ENCODE measurements at regions of chr21 and their contacts with region 1.

Region 1: GRCh38 chr21:42009831-42010523 is at the start of gene ZBTB21:
- DNase-seq: peak; percentile 97
- ATAC-seq: peak; percentile 89
- H3K4me3 ChIP-seq: peak within 1 kb of the TSS; percentile 63
- H3K27ac ChIP-seq: peak within 1 kb of the TSS; percentile 93
- H3K4me1 ChIP-seq: peaks cover 4% of the 10 kb centered on the region
- H3K27me3 ChIP-seq: no peaks in the 10 kb centered on the region
- CTCF ChIP-seq: no peak
- POLR2A ChIP-seq: peak; percentile 80
- RAD21 ChIP-seq: no peak
- total RNA-seq, gene ZBTB21: 12.0 and 13.6 TPM in 2 replicates

Region 2: GRCh38 chr21:41816220-41817165 is 193.5 kb before region 1 on chr21:
- CTCF ChIA-PET with region 1: no interaction called
- POLR2A ChIA-PET with region 1: no interaction called
- dilution Hi-C with region 1: no loop called
- in situ Hi-C with region 1: no loop called
- intact Hi-C with region 1: loop called (anchors 2 kb)
- DNase-seq: peak; percentile 46
- ATAC-seq: peak; percentile 84
- H3K4me3 ChIP-seq: no peak overlapping the region
- H3K27ac ChIP-seq: no peak overlapping the region
- H3K4me1 ChIP-seq: no peaks in the 10 kb centered on the region
- H3K27me3 ChIP-seq: no peaks in the 10 kb centered on the region
- CTCF ChIP-seq: peak; percentile 75
- POLR2A ChIP-seq: no peak
- RAD21 ChIP-seq: peak; percentile 76

Region 3: DNA sequence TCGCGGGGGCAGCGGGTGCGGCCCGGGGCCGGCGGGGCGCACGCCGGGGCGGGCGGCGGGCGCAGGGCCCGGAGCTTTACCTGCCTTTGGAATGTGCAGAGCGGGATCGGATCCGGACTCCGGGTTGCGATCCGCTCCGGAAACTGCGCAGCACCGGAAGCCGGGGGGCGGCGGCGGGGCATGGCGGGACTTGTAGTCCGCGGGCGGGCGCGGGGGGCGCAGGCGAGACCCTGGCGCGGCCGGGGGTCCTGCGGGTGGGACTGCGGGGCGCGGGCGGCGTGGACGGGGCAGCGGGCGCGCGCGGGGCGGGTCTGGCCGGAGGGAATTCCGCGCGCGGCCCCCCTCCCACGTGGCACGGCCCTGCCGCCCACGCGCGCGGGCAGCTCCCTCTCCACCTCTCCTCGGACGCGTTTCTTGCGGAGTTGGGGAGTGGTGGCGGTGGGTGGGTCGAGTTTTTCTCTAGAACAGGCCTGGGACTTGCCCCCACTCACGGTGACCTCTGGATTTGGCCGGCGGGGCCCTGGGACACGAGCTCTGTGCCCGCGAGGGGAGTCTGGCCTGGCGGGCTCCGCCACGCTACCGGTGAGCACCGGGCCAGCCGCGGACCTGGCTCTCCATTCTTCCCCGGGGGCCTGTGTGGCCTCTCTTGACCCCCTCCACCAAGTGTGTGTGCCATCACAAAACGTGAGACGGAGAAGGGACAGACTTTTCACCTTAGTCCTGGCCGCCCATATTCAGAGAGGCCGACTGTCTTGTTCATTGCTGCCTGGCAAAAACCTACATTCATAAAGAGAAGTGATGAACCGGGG is 130.6 kb before region 1 on chr21 and contains the start of gene PRDM15:
- CTCF ChIA-PET with region 1: no interaction called
- POLR2A ChIA-PET with region 1: no interaction called
- dilution Hi-C with region 1: no loop called
- in situ Hi-C with region 1: no loop called
- intact Hi-C with region 1: loop called (anchors 2 kb)
- DNase-seq: peak; percentile 82
- ATAC-seq: peak; percentile 88
- H3K4me3 ChIP-seq: peak within 1 kb of the TSS; percentile 88
- H3K27ac ChIP-seq: peak within 1 kb of the TSS; percentile 99
- H3K4me1 ChIP-seq: peaks cover 3% of the 10 kb centered on the region
- H3K27me3 ChIP-seq: no peaks in the 10 kb centered on the region
- CTCF ChIP-seq: no peak
- POLR2A ChIP-seq: 0 out of 2 replicates have a peak, but pooled peaks have one; percentile 31
- RAD21 ChIP-seq: no peak
- total RNA-seq, gene PRDM15: 5.6 and 8.8 TPM in 2 replicates

Region 4: DNA sequence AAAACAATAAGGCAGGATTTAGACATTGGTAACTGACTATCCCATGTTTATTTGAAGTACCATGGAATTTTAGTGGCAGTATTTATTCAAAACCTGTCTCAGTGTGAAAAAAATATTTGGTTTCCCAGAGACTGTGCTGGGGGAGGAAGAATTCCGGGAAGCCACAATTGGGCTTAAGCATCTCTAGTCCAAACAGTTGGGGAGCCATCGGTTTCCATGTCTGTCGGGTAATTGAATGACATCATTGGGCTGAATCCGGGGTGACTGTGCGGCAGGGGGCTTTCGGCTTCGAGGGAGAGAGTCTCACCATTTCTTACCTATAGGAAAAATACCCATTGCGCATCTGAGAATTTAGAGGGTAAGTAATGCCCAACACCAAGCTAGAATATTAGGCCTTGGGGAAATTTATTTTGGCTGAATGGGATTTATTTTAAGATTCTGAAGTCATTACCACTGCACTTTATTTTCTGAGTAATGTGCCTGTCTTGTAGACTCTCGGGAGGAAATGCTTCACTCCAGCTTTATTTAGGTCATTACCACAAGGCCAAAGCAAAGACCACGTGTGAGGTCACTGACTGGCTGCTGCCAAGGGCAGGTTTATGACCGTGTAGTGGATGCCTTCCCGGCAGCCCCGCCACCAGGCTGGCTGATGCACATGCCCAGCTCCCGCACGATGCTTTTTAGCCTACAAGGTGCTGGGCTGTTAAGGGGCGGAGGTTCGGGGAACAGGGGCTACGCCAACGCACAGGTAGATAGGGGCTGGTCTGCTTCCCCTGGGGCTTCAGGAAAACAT is 38.0 kb after region 1 on chr21:
- CTCF ChIA-PET with region 1: no interaction called
- POLR2A ChIA-PET with region 1: no interaction called
- dilution Hi-C with region 1: no loop called
- in situ Hi-C with region 1: no loop called
- intact Hi-C with region 1: loop called (anchors 5 kb)
- DNase-seq: peak; percentile 99
- ATAC-seq: peak; percentile 91
- H3K4me3 ChIP-seq: no peak overlapping the region
- H3K27ac ChIP-seq: peak overlapping the region; percentile 80
- H3K4me1 ChIP-seq: peaks cover 18% of the 10 kb centered on the region
- H3K27me3 ChIP-seq: no peaks in the 10 kb centered on the region; the same call in 1 of the 2 replicates
- CTCF ChIP-seq: 0 out of 2 replicates have a peak, but pooled peaks have one; percentile 31
- POLR2A ChIP-seq: no peak
- RAD21 ChIP-seq: peak; percentile 49

Region 5: DNA sequence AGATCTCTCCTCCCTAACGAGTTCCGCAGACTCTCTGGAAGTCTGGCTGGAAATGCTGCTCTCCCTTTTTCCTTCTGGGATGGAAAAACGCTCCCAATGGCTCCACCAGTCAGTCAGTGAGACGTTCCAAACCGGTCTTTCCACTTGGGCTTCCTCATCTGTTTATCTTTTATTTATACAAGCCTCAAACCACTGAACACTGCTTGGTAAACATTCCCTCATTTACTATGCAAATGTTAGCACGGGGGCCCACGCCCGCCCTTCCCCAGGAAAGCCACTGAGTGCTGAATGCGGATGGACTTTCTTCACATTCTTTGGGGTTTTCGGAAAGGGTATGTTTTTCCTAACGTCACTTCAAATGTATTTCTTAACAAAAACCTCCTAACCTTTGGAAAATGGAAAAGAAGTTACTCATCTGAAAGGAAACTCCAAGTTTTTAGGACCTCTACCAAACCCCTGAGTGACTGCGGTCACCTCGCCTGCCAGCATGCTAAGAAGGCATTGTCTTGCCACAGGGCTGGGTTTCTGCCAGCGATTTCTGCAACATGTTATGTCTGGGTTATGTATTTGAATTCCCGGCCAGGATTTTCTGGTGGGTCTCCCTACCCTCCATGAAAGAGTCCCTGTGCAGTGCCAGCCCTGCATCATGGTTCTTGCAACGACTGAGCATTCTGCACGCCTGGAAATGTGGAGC is 47.2 kb after region 1 on chr21:
- CTCF ChIA-PET with region 1: no interaction called
- POLR2A ChIA-PET with region 1: no interaction called
- dilution Hi-C with region 1: no loop called
- in situ Hi-C with region 1: no loop called
- intact Hi-C with region 1: loop called (anchors 2 kb)
- DNase-seq: peak; percentile 93
- ATAC-seq: peak; percentile 92
- H3K4me3 ChIP-seq: no peak overlapping the region
- H3K27ac ChIP-seq: peak overlapping the region; percentile 90
- H3K4me1 ChIP-seq: peaks cover 20% of the 10 kb centered on the region
- H3K27me3 ChIP-seq: peaks cover 1% of the 10 kb centered on the region; the same call in 1 of the 2 replicates
- CTCF ChIP-seq: no peak
- POLR2A ChIP-seq: peak; percentile 75; the same call in 1 of the 2 replicates
- RAD21 ChIP-seq: no peak; the same call in 1 of the 2 replicates

Region 6: GRCh38 chr21:42097860-42098454 is 88.0 kb after region 1 on chr21:
- CTCF ChIA-PET with region 1: no interaction called
- POLR2A ChIA-PET with region 1: no interaction called
- dilution Hi-C with region 1: no loop called
- in situ Hi-C with region 1: no loop called
- intact Hi-C with region 1: loop called (anchors 1 kb)
- DNase-seq: peak; percentile 99
- ATAC-seq: peak; percentile 87
- H3K4me3 ChIP-seq: no peak overlapping the region
- H3K27ac ChIP-seq: peak overlapping the region; percentile 94
- H3K4me1 ChIP-seq: peaks cover 16% of the 10 kb centered on the region
- H3K27me3 ChIP-seq: no peaks in the 10 kb centered on the region
- CTCF ChIP-seq: no peak
- POLR2A ChIP-seq: no peak; the same call in 1 of the 2 replicates
- RAD21 ChIP-seq: no peak; the same call in 1 of the 2 replicates

Region 7: GRCh38 chr21:42107881-42108553 is 98.0 kb after region 1 on chr21:
- CTCF ChIA-PET with region 1: interaction called, 7 read pairs
- POLR2A ChIA-PET with region 1: interaction called, 8 read pairs
- dilution Hi-C with region 1: no loop called
- in situ Hi-C with region 1: no loop called
- intact Hi-C with region 1: loop called (anchors 1 kb)
- DNase-seq: peak; percentile 65
- ATAC-seq: peak; percentile 98
- H3K4me3 ChIP-seq: no peak overlapping the region
- H3K27ac ChIP-seq: no peak overlapping the region
- H3K4me1 ChIP-seq: peaks cover 3% of the 10 kb centered on the region; the same call in 1 of the 2 replicates
- H3K27me3 ChIP-seq: peaks cover 8% of the 10 kb centered on the region; the same call in 1 of the 2 replicates
- CTCF ChIP-seq: peak; percentile 82
- POLR2A ChIP-seq: no peak; the same call in 1 of the 2 replicates
- RAD21 ChIP-seq: peak; percentile 88

Measured in IMR-90 (cell line).